Calu3 (cell line): ENCODE measurements at regions of chr17 and their contacts with region 1.

Region 1: GRCh38 chr17:39822051-39822451 is 42.1 kb downstream of the IKZF3 start:
- DNase-seq: peak; percentile 59
- H3K4me3 Mint-ChIP-seq: no peak overlapping the region
- H3K27ac Mint-ChIP-seq: no peak overlapping the region
- H3K4me1 Mint-ChIP-seq: peaks cover 9% of the 10 kb centered on the region
- H3K27me3 Mint-ChIP-seq: no peaks in the 10 kb centered on the region
- CTCF ChIP-seq: no peak

Region 2: GRCh38 chr17:39653662-39654331 is 168.3 kb before region 1 on chr17:
- CTCF ChIA-PET with region 1: interaction called, 94 read pairs
- intact Hi-C with region 1: no loop called
- DNase-seq: peak; percentile 100
- H3K4me3 Mint-ChIP-seq: no peak overlapping the region
- H3K27ac Mint-ChIP-seq: no peak overlapping the region
- H3K4me1 Mint-ChIP-seq: peaks cover 23% of the 10 kb centered on the region
- H3K27me3 Mint-ChIP-seq: no peaks in the 10 kb centered on the region
- CTCF ChIP-seq: no peak

Region 3: DNA sequence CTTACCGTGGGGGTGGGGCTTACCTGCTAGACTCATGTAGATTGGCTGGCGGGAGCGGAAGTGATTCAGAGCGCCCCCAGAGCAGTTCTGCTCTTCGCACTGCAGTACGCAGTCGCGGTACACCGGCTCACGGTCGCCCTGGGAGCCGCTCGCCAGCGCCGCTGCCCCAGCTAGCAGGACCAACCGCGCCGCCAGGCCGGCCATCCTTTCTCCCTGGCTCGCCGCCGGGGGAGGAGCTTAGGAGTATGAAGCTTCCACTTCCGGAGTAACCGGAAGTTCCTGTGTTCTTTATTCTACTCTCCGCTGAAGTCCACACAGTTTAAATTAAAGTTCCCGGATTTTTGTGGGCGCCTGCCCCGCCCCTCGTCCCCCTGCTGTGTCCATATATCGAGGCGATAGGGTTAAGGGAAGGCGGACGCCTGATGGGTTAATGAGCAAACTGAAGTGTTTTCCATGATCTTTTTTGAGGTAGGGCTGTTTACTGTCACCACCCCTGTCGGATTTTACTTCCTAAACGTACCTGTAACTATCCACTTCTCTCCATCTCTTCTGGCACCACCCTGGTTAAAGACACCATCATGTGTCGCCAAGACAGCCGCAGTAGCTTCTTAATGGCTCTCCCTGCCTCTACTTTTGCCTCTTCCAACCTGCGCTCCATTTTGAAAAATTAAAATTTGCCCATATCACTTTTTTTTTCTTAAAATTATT is 134.1 kb before region 1 on chr17 and contains the start of gene PGAP3:
- CTCF ChIA-PET with region 1: interaction called, 78 read pairs
- intact Hi-C with region 1: no loop called
- DNase-seq: peak; percentile 100
- H3K4me3 Mint-ChIP-seq: peak within 1 kb of the TSS; percentile 64
- H3K27ac Mint-ChIP-seq: peak within 1 kb of the TSS; percentile 63
- H3K4me1 Mint-ChIP-seq: peaks cover 27% of the 10 kb centered on the region
- H3K27me3 Mint-ChIP-seq: no peaks in the 10 kb centered on the region
- CTCF ChIP-seq: no peak
- total RNA-seq, gene PGAP3: 1,186 and 1,276 TPM in 2 replicates

Region 4: DNA sequence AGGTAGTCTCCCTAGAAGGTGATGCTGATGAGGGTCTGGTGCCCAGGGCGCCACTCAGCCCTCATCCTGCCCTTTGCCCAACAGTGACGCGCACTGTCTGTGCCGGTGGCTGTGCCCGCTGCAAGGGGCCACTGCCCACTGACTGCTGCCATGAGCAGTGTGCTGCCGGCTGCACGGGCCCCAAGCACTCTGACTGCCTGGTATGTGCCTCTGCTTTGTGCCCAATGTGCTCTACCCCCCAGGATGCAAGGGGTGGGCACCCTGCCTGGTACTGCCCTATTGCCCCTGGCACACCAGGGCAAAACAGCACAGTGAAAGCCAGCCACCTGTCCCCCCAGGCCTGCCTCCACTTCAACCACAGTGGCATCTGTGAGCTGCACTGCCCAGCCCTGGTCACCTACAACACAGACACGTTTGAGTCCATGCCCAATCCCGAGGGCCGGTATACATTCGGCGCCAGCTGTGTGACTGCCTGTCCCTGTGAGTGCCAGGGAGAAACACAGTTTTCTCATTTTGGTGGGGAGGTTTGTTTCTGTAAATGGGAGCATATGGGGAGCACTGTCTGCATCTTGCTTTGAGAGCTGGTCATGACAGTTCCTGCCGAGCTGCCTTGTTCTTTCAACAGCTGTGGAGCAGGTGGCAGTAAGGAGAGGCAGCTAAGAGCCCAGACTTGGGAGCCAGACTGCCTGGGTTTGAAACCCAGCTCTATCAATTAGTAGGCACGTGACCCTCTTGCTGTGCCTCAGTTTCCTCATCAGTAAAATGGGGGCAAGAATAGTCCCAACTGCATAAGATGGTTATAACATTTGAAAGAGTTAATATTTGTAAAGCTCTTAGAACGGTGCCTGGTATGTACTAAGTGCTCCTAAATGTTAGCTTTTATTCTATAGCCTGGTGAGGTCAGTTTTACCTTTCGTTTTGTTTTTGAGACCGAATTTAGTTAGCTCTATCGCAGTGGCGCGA is 111.8 kb before region 1 on chr17:
- CTCF ChIA-PET with region 1: interaction called, 146 read pairs
- intact Hi-C with region 1: no loop called
- DNase-seq: no peak
- H3K4me3 Mint-ChIP-seq: no peak overlapping the region
- H3K27ac Mint-ChIP-seq: peak overlapping the region; percentile 3
- H3K4me1 Mint-ChIP-seq: peaks cover 47% of the 10 kb centered on the region
- H3K27me3 Mint-ChIP-seq: no peaks in the 10 kb centered on the region
- CTCF ChIP-seq: no peak

Region 5: DNA sequence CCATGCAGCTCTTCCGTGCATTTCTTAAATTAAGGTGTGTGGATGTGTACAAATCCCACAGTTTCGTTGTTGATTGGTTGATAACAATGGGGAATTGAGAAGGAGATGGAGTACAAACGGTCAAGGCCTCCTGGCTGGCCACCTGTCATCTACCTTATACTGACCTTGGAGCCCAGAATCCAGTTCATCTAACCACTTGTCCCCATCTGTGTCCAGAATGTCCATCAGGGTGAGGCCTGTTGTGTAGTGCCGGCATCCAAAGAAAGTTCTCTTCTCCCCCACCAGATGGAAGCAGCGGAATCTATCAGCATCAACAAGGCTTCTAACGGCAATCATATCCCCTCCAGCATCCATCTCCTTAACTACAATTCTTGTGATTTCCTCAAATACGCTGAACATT is 94.9 kb after region 1 on chr17:
- CTCF ChIA-PET with region 1: interaction called, 1,004 read pairs
- intact Hi-C with region 1: no loop called
- DNase-seq: peak; percentile 94
- H3K4me3 Mint-ChIP-seq: no peak overlapping the region
- H3K27ac Mint-ChIP-seq: no peak overlapping the region
- H3K4me1 Mint-ChIP-seq: peaks cover 24% of the 10 kb centered on the region
- H3K27me3 Mint-ChIP-seq: no peaks in the 10 kb centered on the region
- CTCF ChIP-seq: no peak